Calu3 (cell line): ENCODE measurements at regions of chr6 and their contacts with region 1.

Region 1: GRCh38 chr6:85404502-85405174 is 45.2 kb upstream of the NT5E start:
- DNase-seq: peak; percentile 75
- H3K4me3 Mint-ChIP-seq: peak overlapping the region; percentile 71
- H3K27ac Mint-ChIP-seq: peak overlapping the region; percentile 99
- H3K4me1 Mint-ChIP-seq: peaks cover 74% of the 10 kb centered on the region
- H3K27me3 Mint-ChIP-seq: no peaks in the 10 kb centered on the region
- CTCF ChIP-seq: no peak

Region 2: DNA sequence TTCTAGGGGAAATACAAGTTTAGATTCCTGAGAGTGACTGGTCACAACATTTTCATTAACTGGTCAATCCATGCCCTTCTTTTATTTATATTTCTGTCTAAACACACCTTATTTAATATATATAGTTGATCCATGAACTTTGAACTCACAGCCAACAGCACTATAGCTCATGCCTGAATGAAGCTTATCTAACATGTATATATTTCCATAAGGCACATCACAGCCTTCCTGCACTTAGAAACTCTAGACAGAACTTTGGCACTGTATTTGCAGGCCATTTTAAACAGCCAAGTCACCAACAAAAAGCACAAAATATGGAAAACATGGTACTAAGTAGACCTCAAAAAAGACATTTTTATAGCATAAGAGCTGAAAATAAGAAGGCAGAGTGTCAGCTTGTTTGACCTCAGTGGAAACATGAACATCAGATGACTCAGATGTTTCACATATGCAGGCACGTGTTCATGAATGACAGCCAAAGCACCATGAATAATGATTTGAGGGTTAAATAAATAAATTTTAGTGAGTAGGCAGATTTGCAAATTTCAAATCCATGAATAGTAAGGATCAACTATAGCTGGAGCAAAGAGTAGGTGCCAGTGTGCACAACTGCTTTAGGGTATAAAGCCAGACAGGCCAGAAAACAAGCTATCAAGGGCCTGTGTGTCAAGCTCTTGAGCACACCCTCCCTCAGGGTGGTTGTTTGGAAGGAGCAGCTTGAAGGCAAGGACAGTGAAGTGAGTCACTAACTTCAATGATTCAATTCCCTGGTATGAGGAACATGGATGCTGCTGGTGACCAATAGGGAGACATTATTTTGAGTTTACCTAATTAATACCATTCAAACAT is 43.6 kb before region 1 on chr6:
- CTCF ChIA-PET with region 1: interaction called, 13 read pairs
- intact Hi-C with region 1: loop called (anchors 1 kb)
- DNase-seq: peak; percentile 72
- H3K4me3 Mint-ChIP-seq: no peak overlapping the region
- H3K27ac Mint-ChIP-seq: peak overlapping the region; percentile 89
- H3K4me1 Mint-ChIP-seq: peaks cover 47% of the 10 kb centered on the region
- H3K27me3 Mint-ChIP-seq: no peaks in the 10 kb centered on the region
- CTCF ChIP-seq: no peak

Region 3: GRCh38 chr6:85429346-85429745 is 24.7 kb after region 1 on chr6:
- CTCF ChIA-PET with region 1: no interaction called
- intact Hi-C with region 1: no loop called
- DNase-seq: no peak
- H3K4me3 Mint-ChIP-seq: no peak overlapping the region
- H3K27ac Mint-ChIP-seq: no peak overlapping the region
- H3K4me1 Mint-ChIP-seq: no peaks in the 10 kb centered on the region
- H3K27me3 Mint-ChIP-seq: no peaks in the 10 kb centered on the region
- CTCF ChIP-seq: no peak

Region 4: GRCh38 chr6:85449818-85450759 is 45.5 kb after region 1 on chr6 and contains the start of gene NT5E:
- CTCF ChIA-PET with region 1: interaction called, 16 read pairs
- intact Hi-C with region 1: loop called (anchors 1 kb)
- DNase-seq: peak; percentile 86
- H3K4me3 Mint-ChIP-seq: peak within 1 kb of the TSS; percentile 99
- H3K27ac Mint-ChIP-seq: peak within 1 kb of the TSS; percentile 89
- H3K4me1 Mint-ChIP-seq: peaks cover 65% of the 10 kb centered on the region
- H3K27me3 Mint-ChIP-seq: no peaks in the 10 kb centered on the region
- CTCF ChIP-seq: no peak
- total RNA-seq, gene NT5E: 52.8 and 76.5 TPM in 2 replicates

Region 5: GRCh38 chr6:85464260-85464644 is 59.6 kb after region 1 on chr6:
- CTCF ChIA-PET with region 1: interaction called, 3 read pairs
- intact Hi-C with region 1: loop called (anchors 2 kb)
- DNase-seq: peak; percentile 67
- H3K4me3 Mint-ChIP-seq: peak overlapping the region; percentile 20
- H3K27ac Mint-ChIP-seq: peak overlapping the region; percentile 87
- H3K4me1 Mint-ChIP-seq: peaks cover 76% of the 10 kb centered on the region
- H3K27me3 Mint-ChIP-seq: no peaks in the 10 kb centered on the region
- CTCF ChIP-seq: no peak

Region 6: GRCh38 chr6:85660181-85660611 is 255.6 kb after region 1 on chr6:
- CTCF ChIA-PET with region 1: no interaction called
- intact Hi-C with region 1: no loop called
- DNase-seq: no peak
- H3K4me3 Mint-ChIP-seq: no peak overlapping the region
- H3K27ac Mint-ChIP-seq: no peak overlapping the region
- H3K4me1 Mint-ChIP-seq: no peaks in the 10 kb centered on the region
- H3K27me3 Mint-ChIP-seq: no peaks in the 10 kb centered on the region
- CTCF ChIP-seq: no peak